ENCODE measurements at regions of chr3 and their contacts with region 1.

Region 1: GRCh38 chr3:16399473-16399872 is 114.0 kb downstream of the RFTN1 start:
- DNase-seq: no peak
- ATAC-seq: peak; percentile 45 to 61
- H3K4me3 ChIP-seq: no peak overlapping the region
- H3K27ac ChIP-seq: peak overlapping the region; percentile 39 to 67 (median 54)
- H3K4me1 ChIP-seq: peaks cover 22 to 26% of the 10 kb centered on the region in 2 donors
- H3K27me3 ChIP-seq: no peaks in the 10 kb centered on the region
- CTCF ChIP-seq: no peak
- POLR2A ChIP-seq: no peak

Region 2: DNA sequence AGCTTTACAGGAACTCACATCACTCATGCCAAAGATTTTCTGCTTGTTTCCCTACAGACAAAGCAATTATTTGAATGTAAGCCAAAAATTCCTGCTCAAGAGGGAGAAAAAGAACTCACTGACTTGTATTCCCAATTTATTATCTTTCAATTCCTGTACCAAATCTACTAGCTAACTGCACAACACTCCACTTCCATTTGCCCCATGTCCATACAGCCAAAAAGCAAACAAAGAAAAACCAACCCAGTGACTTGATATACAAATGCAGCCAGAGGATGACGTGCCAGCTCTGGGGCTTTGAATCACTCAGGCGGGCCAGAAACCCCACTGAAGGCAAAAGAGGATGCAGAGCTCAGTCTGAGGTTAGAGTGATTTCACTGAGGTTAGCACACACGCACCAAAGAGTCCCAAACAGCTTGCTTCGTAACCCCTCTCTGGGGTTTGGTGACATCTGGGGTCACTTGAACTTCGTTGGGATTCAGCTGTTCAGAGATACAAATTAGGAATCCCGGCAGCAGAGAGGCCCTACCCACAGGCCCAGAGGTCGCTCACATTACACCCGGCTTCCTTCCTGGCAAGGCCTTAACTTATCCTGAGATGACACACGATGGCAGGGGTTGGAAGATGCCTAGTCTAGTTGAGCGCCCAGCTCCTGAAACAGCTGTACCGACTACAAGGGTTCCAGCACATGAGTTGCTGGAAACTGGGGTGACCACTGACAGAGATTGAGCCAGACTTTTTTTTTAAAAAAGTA is 112.4 kb after region 1 on chr3:
- in situ Hi-C with region 1: no loop called
- intact Hi-C with region 1: loop called (anchors 5 kb)
- DNase-seq: peak; percentile 45 to 61
- ATAC-seq: peak; percentile 69 to 77
- H3K4me3 ChIP-seq: peak overlapping the region; percentile 73 to 83 (median 80)
- H3K27ac ChIP-seq: peak overlapping the region; percentile 75 to 86 (median 78)
- H3K4me1 ChIP-seq: peaks cover 40 to 55% of the 10 kb centered on the region in 2 donors
- H3K27me3 ChIP-seq: no peaks in the 10 kb centered on the region
- CTCF ChIP-seq: no peak
- POLR2A ChIP-seq: no peak